ENCODE measurements at regions of chr3 and their contacts with region 1.

Region 1: DNA sequence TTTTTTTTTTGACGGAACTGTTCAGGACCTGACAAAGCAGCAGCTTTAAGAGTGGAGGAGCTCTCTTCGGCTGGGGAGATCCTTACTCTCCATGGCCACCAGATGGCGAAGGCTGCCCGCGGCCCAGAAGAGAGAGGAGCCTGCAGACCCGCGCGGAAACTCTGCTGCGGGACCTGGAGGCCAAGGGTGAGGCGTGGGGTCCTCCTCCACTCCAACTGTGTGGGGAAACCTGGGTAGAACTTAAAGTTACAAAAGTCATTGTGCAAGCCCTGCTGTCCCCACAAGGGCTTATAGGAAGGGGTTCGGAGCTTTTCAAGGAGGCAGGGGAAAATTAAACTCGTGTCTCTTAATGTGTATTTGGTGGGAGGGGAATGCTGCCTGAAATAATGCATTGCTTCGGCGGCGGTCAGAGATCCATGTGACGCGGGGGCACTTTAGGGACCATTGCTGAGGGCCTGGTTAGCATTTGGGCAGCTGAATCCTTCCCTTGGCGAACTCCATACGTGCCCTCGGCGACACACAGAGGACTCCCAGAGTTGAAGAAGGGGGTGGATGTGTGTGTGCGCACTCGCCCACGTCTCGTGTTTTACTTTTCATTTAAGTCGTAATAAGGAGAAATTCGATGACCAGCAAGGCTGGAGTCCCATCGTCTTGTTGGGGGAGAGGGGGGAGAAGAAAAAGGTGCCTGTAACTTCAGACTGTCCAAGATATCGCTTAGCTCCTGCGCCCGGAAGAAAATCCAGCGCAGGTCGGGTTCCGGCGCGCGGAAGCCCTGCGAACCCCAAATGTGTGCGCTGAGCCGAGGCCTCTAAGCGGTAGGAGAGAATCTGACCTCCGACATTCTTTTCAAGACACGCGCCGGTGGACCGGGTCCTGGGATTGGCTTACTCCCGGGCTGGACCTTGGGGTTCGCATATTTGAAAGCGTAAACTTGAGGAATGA is 9.7 kb downstream of the EOMES start:
- DNase-seq: peak; percentile 94
- H3K4me3 ChIP-seq: peak overlapping the region; percentile 50 to 68 (median 57)
- H3K27ac ChIP-seq: peak overlapping the region in 1 of 4 donors; percentile 26
- H3K4me1 ChIP-seq: peaks cover 26 to 38% (median 31%) of the 10 kb centered on the region in 4 donors
- H3K27me3 ChIP-seq: peaks cover 5 to 43% (median 25%) of the 10 kb centered on the region in 4 donors
- CTCF ChIP-seq: peak; percentile 68 to 81 (median 69)
- EP300 ChIP-seq: no peak
- POLR2A ChIP-seq: no peak

Region 2: DNA sequence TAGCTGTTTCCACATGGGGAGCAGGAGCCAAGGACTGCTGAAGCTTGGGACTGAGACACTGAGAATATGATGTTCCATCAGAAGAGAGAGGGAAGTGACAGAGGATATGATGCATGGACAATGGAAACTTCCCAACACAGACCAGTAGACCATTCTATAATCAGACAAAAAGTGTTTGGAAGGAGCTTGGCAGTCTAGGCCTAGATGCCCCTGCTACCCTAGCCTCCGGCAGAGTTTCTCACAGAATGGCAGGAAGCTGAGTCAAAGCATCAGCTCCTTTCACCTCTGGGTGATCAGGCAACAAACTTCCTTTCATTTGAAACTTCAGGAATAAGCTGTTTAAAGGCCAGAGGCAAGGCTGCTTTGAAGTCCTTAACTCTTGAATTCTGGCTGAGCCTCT is 565.2 kb before region 1 on chr3:
- intact Hi-C with region 1: no loop called
- DNase-seq: no peak
- H3K4me3 ChIP-seq: no peak overlapping the region
- H3K27ac ChIP-seq: no peak overlapping the region
- H3K4me1 ChIP-seq: no peaks in the 10 kb centered on the region
- H3K27me3 ChIP-seq: no peaks in the 10 kb centered on the region
- CTCF ChIP-seq: no peak
- EP300 ChIP-seq: no peak
- POLR2A ChIP-seq: no peak

Region 3: DNA sequence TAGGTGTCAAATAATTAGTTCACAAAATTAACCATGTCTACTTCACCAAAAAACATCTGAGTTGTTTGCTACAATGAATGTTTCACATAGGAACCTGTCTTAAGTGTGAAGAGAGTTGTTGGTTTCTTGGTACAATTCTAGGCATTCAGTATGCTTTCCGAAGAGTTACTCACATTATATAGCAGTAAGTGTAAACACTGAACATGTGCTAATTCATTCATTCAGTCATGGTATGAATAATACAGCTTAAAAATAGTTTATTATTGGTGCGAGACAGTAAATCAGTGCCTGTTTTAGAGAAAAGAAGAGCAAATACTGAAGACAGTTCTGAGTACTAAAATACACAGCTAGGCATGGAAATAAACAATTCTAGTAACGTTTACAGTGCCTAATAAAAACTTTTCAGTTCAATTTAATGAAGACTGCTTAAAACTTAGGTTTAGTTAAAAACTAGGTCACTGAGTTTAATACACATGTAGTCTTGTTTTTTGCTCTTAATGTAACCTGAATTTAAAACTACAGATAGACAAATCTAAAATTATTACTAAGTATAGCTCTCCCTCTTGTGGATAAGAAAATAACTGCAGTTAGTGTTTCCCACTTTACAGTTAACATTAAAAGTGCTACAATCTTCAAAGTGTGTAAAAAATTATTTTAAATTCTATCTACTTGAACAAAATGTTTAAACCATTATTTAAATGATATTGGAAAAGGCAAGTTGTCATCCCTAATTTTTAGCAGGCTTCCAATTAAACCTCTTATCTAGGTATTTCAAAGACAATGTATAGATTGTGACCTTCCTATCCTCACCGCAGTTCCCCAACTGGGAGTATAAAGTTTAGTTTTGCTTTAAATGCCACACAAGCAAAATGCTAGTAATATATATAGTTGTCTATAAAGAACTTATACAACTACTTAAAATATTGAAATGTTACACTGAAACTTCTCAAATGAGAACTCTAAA is 616.1 kb after region 1 on chr3:
- intact Hi-C with region 1: loop called (anchors 1 kb)
- DNase-seq: no peak
- H3K4me3 ChIP-seq: no peak overlapping the region
- H3K27ac ChIP-seq: no peak overlapping the region
- H3K4me1 ChIP-seq: no peaks in the 10 kb centered on the region
- H3K27me3 ChIP-seq: no peaks in the 10 kb centered on the region
- CTCF ChIP-seq: peak; percentile 68 to 78 (median 77)
- EP300 ChIP-seq: no peak
- POLR2A ChIP-seq: no peak

Measured in esophagus muscularis mucosa (tissue), 4 donors.